CD4-positive, alpha-beta memory T cell (primary cell): ENCODE measurements at regions of chr18 and their contacts with region 1.

Region 1: DNA sequence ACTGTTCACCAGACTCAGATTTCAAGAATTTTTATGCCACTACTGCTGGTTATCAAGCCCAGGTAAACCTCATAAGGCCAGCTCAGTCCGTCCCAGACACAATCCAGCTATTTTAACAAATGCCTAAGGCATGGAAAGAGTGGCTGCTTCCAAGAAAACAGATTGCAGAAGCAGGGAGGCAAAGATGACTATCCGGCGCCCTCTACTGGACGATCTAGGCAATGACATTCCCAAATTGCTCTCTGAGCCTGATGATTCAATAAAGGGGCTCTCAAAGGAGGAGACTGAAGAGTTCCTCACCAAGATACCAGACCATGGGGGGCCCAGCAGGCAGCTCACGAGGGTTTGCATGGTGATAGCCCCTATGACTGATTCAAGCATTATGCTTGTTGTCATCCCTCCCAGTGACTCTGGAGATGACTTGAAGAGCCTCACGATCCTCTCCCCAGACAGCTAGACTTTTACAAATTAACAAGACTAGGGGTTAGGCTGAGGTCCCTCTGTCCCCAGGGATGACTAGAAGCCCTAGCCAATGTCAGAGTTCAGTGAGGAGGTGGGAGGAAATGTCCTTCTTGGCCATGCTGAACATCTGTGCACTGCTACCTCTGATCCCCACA is 25.0 kb downstream of the SERPINB8 start:
- DNase-seq: peak in 4 of 5 donors; percentile 20 to 36 (median 28)
- H3K4me3 ChIP-seq: no peak overlapping the region
- H3K4me3 Mint-ChIP-seq: no peak overlapping the region
- H3K27ac ChIP-seq: no peak overlapping the region
- H3K27ac Mint-ChIP-seq: no peak overlapping the region
- H3K4me1 ChIP-seq: no peaks in the 10 kb centered on the region
- H3K4me1 Mint-ChIP-seq: peaks cover 0 to 9% (median 8%) of the 10 kb centered on the region in 4 donors
- H3K27me3 ChIP-seq: no peaks in the 10 kb centered on the region
- H3K27me3 Mint-ChIP-seq: peaks cover 1 to 2% of the 10 kb centered on the region in 2 donors

Region 2: GRCh38 chr18:64009305-64009704 is 14.4 kb after region 1 on chr18:
- CTCF ChIA-PET with region 1: interaction called, 16 read pairs
- POLR2A ChIA-PET with region 1: no interaction called
- intact Hi-C with region 1: no loop called
- DNase-seq: no peak
- H3K4me3 ChIP-seq: no peak overlapping the region
- H3K4me3 Mint-ChIP-seq: no peak overlapping the region
- H3K27ac ChIP-seq: no peak overlapping the region
- H3K27ac Mint-ChIP-seq: no peak overlapping the region
- H3K4me1 ChIP-seq: no peaks in the 10 kb centered on the region
- H3K4me1 Mint-ChIP-seq: no peaks in the 10 kb centered on the region
- H3K27me3 ChIP-seq: no peaks in the 10 kb centered on the region
- H3K27me3 Mint-ChIP-seq: peaks cover 0 to 2% of the 10 kb centered on the region in 2 donors

Region 3: GRCh38 chr18:64082054-64082453 is 87.2 kb after region 1 on chr18:
- CTCF ChIA-PET with region 1: no interaction called
- POLR2A ChIA-PET with region 1: no interaction called
- intact Hi-C with region 1: no loop called
- DNase-seq: no peak
- H3K4me3 ChIP-seq: no peak overlapping the region
- H3K4me3 Mint-ChIP-seq: no peak overlapping the region
- H3K27ac ChIP-seq: no peak overlapping the region
- H3K27ac Mint-ChIP-seq: no peak overlapping the region
- H3K4me1 ChIP-seq: no peaks in the 10 kb centered on the region
- H3K4me1 Mint-ChIP-seq: no peaks in the 10 kb centered on the region
- H3K27me3 ChIP-seq: no peaks in the 10 kb centered on the region
- H3K27me3 Mint-ChIP-seq: no peaks in the 10 kb centered on the region